Head of caudate nucleus (tissue), 42 donors: ENCODE measurements at regions of chr17 and their contacts with region 1.

Region 1: GRCh38 chr17:16521070-16521727 is 29.2 kb upstream of the LRRC75A start:
- DNase-seq: peak; percentile 32 to 91 (median 78)

Region 2: DNA sequence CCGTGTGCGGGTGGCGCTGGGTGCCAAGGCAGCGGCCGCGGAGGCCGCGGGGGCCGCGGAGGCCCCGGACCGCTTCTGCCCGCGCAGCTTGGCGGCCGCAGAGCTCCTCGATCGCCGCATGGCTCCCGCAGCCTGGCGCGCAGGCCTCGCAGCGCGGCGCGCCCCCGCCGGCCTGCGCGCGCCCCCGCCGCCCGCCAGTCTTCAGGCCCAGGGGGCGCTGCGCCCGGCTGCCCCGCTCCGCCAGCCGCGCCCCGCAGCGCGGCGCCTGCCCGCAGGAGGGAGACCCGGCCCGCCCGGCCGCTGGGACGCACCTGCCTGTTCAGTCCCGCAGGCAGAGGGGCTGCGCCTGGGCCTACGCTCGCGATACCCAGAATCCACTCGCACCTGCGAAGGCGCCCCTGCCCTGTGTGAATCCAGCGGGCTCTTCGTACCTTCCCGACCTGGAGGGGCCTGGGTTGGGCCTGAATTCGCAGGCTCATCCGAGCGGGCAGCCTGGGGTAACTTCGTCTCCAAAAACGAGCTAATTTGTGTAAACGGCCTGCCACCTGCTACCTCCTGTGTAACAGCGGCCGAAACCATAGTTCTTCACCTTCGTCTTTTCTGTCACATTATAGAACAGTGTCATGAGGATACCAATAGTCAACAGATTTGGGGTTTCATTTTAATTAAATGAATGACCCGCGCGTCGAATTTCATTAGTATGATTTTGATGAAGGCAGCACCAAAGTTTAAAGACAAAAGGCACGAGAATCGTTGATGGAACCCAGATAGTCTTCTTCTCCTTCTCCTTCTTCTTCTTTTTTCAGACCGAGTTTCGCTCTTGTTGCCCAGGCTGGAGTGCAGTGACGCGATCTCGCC is 167.7 kb before region 1 on chr17 and contains the start of gene CENPV:
- intact Hi-C with region 1: loop called (anchors 10 kb)
- DNase-seq: peak in 39 of 42 donors; percentile 7 to 72 (median 49)

Region 3: GRCh38 chr17:16380640-16381495 is 140.3 kb before region 1 on chr17 and contains the start of gene UBB:
- intact Hi-C with region 1: loop called (anchors 10 kb)
- DNase-seq: peak; percentile 92 to 98 (median 96)

Region 4: GRCh38 chr17:16453493-16453851 is 67.7 kb before region 1 on chr17:
- intact Hi-C with region 1: loop called (anchors 2 kb)
- DNase-seq: no peak

Region 5: GRCh38 chr17:16623282-16623681 is 102.1 kb after region 1 on chr17:
- intact Hi-C with region 1: no loop called
- DNase-seq: no peak